Colonic mucosa (tissue), 4 donors: ENCODE measurements at regions of chr19 and their contacts with region 1.

Region 1: DNA sequence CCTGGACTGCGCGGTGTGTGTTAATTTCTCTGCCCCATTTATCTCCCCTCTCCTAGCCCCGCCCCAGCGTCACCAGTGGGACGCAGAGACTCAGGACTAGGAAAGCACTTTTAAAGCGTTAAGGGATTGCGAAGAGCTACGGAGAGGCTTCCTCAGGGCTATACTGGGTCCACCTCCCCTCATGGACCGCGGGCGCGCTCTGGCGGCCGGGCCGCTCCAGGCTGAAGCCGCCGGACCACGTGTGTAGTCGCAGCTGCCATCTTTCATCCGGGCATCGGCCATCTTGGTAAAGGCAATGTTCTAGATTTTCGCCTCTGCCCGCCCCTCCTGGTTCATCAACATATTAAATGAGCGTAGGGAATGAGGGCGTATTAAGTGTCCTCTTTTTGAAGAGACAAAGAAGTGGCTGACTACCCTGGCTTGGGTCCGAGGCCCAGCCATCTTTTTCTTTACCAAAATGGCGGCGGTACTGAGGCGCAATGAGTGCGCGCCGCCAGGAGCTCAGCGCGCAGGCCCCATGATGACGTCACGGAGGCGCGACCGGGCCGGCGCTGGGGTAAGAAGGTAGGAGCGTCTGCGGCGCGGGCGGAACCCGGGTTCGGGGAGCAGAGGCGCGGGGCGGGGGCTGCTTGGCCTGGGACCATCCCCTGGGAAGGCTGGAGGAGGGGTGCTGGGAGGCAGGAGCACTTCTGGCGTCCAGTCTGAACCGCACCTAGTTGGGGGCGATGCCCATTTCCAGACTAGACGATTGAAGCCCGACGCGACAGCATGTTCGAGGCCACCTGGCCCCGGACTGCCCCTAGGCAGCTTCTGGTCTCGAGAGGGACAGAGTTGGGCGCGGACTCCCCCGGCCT is at the start of gene CCDC124:
- DNase-seq: peak; percentile 93
- H3K4me3 ChIP-seq: peak within 1 kb of the TSS; percentile 87
- H3K27ac ChIP-seq: peak within 1 kb of the TSS; percentile 39
- H3K4me1 ChIP-seq: peaks cover 9% of the 10 kb centered on the region
- H3K27me3 ChIP-seq: no peaks in the 10 kb centered on the region
- CTCF ChIP-seq: peak; percentile 80
- total RNA-seq, gene CCDC124: 45.2 to 122 TPM

Region 2: GRCh38 chr19:17807731-17808316 is 124.9 kb before region 1 on chr19:
- intact Hi-C with region 1: no loop called
- DNase-seq: no peak
- H3K4me3 ChIP-seq: no peak overlapping the region
- H3K27ac ChIP-seq: no peak overlapping the region
- H3K4me1 ChIP-seq: no peaks in the 10 kb centered on the region
- H3K27me3 ChIP-seq: no peaks in the 10 kb centered on the region
- CTCF ChIP-seq: no peak

Region 3: GRCh38 chr19:17865364-17866311 is 67.1 kb before region 1 on chr19:
- intact Hi-C with region 1: loop called (anchors 2 kb)
- DNase-seq: peak; percentile 85
- H3K4me3 ChIP-seq: no peak overlapping the region
- H3K27ac ChIP-seq: peak overlapping the region; percentile 61
- H3K4me1 ChIP-seq: peaks cover 9% of the 10 kb centered on the region
- H3K27me3 ChIP-seq: peaks cover 2% of the 10 kb centered on the region
- CTCF ChIP-seq: no peak

Region 4: GRCh38 chr19:17889609-17890214 is 43.0 kb before region 1 on chr19:
- intact Hi-C with region 1: no loop called
- DNase-seq: no peak
- H3K4me3 ChIP-seq: no peak overlapping the region
- H3K27ac ChIP-seq: no peak overlapping the region
- H3K4me1 ChIP-seq: no peaks in the 10 kb centered on the region
- H3K27me3 ChIP-seq: no peaks in the 10 kb centered on the region
- CTCF ChIP-seq: no peak